MCF 10A (cell line): ENCODE measurements at regions of chr2 and their contacts with region 1.

Region 1: DNA sequence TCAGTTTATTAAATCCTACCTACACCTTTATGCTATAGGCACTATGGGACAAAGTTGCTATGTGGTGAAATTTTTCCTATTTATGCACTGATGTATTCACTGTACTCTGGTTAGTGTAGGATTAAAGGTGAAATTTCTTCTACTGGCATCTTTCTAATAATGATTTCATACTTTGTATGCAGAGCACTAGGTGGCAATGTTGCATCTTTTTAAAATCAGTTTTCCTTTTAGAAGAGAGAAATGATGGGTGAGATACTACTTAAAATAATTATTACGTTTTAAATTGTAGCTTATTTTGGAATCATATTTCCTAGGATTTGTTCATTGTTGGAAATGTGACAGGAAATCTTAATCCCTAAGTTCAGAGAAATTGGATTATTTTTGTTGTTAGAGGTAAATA is 150.9 kb downstream of the CD8B2 start:
- DNase-seq: no peak
- H3K4me3 Mint-ChIP-seq: no peak overlapping the region
- H3K27ac Mint-ChIP-seq: no peak overlapping the region
- H3K4me1 Mint-ChIP-seq: no peaks in the 10 kb centered on the region
- H3K27me3 Mint-ChIP-seq: no peaks in the 10 kb centered on the region
- CTCF ChIP-seq: peak; percentile 55

Region 2: GRCh38 chr2:106701203-106702022 is 63.4 kb after region 1 on chr2:
- CTCF ChIA-PET with region 1: no interaction called
- POLR2A ChIA-PET with region 1: no interaction called
- intact Hi-C with region 1: no loop called
- DNase-seq: no peak
- H3K4me3 Mint-ChIP-seq: no peak overlapping the region
- H3K27ac Mint-ChIP-seq: no peak overlapping the region
- H3K4me1 Mint-ChIP-seq: no peaks in the 10 kb centered on the region
- H3K27me3 Mint-ChIP-seq: no peaks in the 10 kb centered on the region
- CTCF ChIP-seq: no peak

Region 3: GRCh38 chr2:106841886-106842645 is 204.0 kb after region 1 on chr2:
- CTCF ChIA-PET with region 1: no interaction called
- POLR2A ChIA-PET with region 1: no interaction called
- intact Hi-C with region 1: no loop called
- DNase-seq: no peak
- H3K4me3 Mint-ChIP-seq: no peak overlapping the region
- H3K27ac Mint-ChIP-seq: no peak overlapping the region
- H3K4me1 Mint-ChIP-seq: no peaks in the 10 kb centered on the region
- H3K27me3 Mint-ChIP-seq: no peaks in the 10 kb centered on the region
- CTCF ChIP-seq: no peak

Region 4: GRCh38 chr2:106868275-106868674 is 230.2 kb after region 1 on chr2:
- CTCF ChIA-PET with region 1: interaction called, 3 read pairs
- POLR2A ChIA-PET with region 1: no interaction called
- intact Hi-C with region 1: loop called (anchors 5 kb)
- DNase-seq: no peak
- H3K4me3 Mint-ChIP-seq: no peak overlapping the region
- H3K27ac Mint-ChIP-seq: no peak overlapping the region
- H3K4me1 Mint-ChIP-seq: peaks cover 15% of the 10 kb centered on the region
- H3K27me3 Mint-ChIP-seq: no peaks in the 10 kb centered on the region
- CTCF ChIP-seq: peak; percentile 21

Region 5: DNA sequence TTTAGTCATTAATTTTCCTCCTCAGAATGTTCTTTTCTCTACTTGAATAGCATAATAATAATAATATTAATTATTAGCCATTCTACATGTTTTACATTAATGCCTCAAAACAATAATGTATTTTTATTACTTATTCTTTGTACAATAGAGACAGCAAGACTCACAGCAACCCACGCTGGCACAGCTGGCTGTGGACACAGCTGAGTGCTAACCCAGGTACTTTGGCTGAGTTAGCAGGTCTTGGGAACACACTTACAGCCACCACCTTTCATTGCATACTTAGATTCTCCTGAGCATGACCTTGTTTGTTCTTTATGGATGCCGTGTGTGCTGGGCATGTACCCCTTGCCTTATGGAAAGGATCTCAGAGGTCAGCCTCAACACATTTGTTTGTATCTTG is 508.1 kb after region 1 on chr2:
- CTCF ChIA-PET with region 1: no interaction called
- POLR2A ChIA-PET with region 1: no interaction called
- intact Hi-C with region 1: no loop called
- DNase-seq: no peak
- H3K4me3 Mint-ChIP-seq: no peak overlapping the region
- H3K27ac Mint-ChIP-seq: no peak overlapping the region
- H3K4me1 Mint-ChIP-seq: no peaks in the 10 kb centered on the region
- H3K27me3 Mint-ChIP-seq: no peaks in the 10 kb centered on the region
- CTCF ChIP-seq: no peak

Region 6: GRCh38 chr2:107569496-107569895 is 931.5 kb after region 1 on chr2:
- CTCF ChIA-PET with region 1: no interaction called
- POLR2A ChIA-PET with region 1: no interaction called
- intact Hi-C with region 1: loop called (anchors 2 kb)
- DNase-seq: no peak
- H3K4me3 Mint-ChIP-seq: no peak overlapping the region
- H3K27ac Mint-ChIP-seq: no peak overlapping the region
- H3K4me1 Mint-ChIP-seq: no peaks in the 10 kb centered on the region
- H3K27me3 Mint-ChIP-seq: no peaks in the 10 kb centered on the region
- CTCF ChIP-seq: no peak

Region 7: GRCh38 chr2:107669335-107669734 is 1031.3 kb after region 1 on chr2:
- CTCF ChIA-PET with region 1: interaction called, 9 read pairs
- POLR2A ChIA-PET with region 1: no interaction called
- intact Hi-C with region 1: loop called (anchors 2 kb)
- DNase-seq: peak; percentile 37
- H3K4me3 Mint-ChIP-seq: no peak overlapping the region
- H3K27ac Mint-ChIP-seq: no peak overlapping the region
- H3K4me1 Mint-ChIP-seq: no peaks in the 10 kb centered on the region
- H3K27me3 Mint-ChIP-seq: no peaks in the 10 kb centered on the region
- CTCF ChIP-seq: peak; percentile 53

Region 8: DNA sequence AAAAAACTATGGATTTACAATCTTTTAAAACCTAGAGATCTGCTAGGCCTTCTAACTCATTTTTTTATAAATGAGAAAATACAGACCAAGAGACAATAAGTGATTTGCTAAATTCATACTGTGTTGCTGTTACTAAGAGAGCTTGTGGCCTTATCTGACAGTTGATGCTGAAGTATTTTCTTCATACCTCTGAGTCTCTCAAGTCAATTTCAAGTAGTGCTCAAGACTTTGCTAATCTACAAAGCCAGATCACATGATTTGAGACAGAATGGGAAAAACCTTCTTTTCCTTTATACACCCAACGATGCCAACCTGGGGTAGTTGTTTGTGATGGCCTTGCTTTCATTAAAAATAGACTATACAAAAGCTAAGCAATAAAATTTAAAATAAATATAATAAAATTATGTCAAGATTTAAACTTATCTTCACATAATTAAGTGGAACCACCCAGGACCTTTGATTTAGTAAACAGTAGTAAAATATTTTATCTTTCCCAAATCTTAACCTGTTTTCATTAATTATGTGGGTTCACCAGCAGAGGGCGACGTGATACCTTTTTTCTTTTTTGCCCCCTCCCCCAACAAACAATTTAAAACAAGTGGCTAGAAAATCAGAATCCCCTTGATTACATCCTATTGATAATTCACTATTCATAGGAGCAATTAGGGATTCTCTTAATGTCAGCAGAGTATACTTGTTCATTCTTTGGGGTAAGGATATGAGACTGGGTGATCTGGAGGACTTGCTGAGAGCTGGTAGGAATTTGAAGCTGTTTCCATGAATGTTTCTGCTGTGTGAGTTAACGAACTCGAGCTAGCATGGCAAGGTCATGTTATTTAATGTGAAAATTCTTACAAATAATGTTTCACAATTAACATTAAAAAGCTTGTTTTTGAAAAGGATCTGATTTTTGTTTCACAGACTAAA is 1298.7 kb after region 1 on chr2:
- CTCF ChIA-PET with region 1: interaction called, 8 read pairs
- POLR2A ChIA-PET with region 1: no interaction called
- intact Hi-C with region 1: loop called (anchors 2 kb)
- DNase-seq: peak; percentile 40
- H3K4me3 Mint-ChIP-seq: no peak overlapping the region
- H3K27ac Mint-ChIP-seq: no peak overlapping the region
- H3K4me1 Mint-ChIP-seq: peaks cover 11% of the 10 kb centered on the region
- H3K27me3 Mint-ChIP-seq: peaks cover 16% of the 10 kb centered on the region
- CTCF ChIP-seq: peak; percentile 59

Region 9: GRCh38 chr2:108169982-108170625 is 1532.1 kb after region 1 on chr2:
- CTCF ChIA-PET with region 1: no interaction called
- POLR2A ChIA-PET with region 1: no interaction called
- intact Hi-C with region 1: loop called (anchors 5 kb)
- DNase-seq: peak; percentile 42
- H3K4me3 Mint-ChIP-seq: no peak overlapping the region
- H3K27ac Mint-ChIP-seq: no peak overlapping the region
- H3K4me1 Mint-ChIP-seq: no peaks in the 10 kb centered on the region
- H3K27me3 Mint-ChIP-seq: peaks cover 49% of the 10 kb centered on the region
- CTCF ChIP-seq: peak; percentile 43